T-cell (primary cell): ENCODE measurements at regions of chr21 and their contacts with region 1.

Region 1: GRCh38 chr21:42187976-42188653 is 30.8 kb upstream of the ABCG1 start:
- DNase-seq: peak; percentile 52 to 92 (median 78)
- ATAC-seq: peak; percentile 94 to 95 (median 95)
- H3K4me3 ChIP-seq: peak overlapping the region; percentile 6 to 11
- H3K4me3 Mint-ChIP-seq: peak overlapping the region; percentile 62 to 74 (median 62)
- H3K27ac ChIP-seq: peak overlapping the region; percentile 75
- H3K27ac Mint-ChIP-seq: peak overlapping the region; percentile 97 to 98
- H3K4me1 ChIP-seq: peaks cover 66 to 89% of the 10 kb centered on the region in 2 experiments
- H3K4me1 Mint-ChIP-seq: peaks cover 76 to 80% (median 79%) of the 10 kb centered on the region in 3 donors
- H3K27me3 ChIP-seq: no peaks in the 10 kb centered on the region
- H3K27me3 Mint-ChIP-seq: no peaks in the 10 kb centered on the region

Region 2: GRCh38 chr21:42440187-42440792 is 252.2 kb after region 1 on chr21:
- CTCF ChIA-PET with region 1: no interaction called
- POLR2A ChIA-PET with region 1: no interaction called
- DNase-seq: no peak
- ATAC-seq: no peak
- H3K4me3 ChIP-seq: no peak overlapping the region
- H3K4me3 Mint-ChIP-seq: no peak overlapping the region
- H3K27ac ChIP-seq: peak overlapping the region; percentile 21
- H3K27ac Mint-ChIP-seq: peak overlapping the region; percentile 80 to 82
- H3K4me1 ChIP-seq: peaks cover 0 to 30% of the 10 kb centered on the region in 2 experiments
- H3K4me1 Mint-ChIP-seq: peaks cover 34 to 50% (median 42%) of the 10 kb centered on the region in 3 donors
- H3K27me3 ChIP-seq: no peaks in the 10 kb centered on the region
- H3K27me3 Mint-ChIP-seq: no peaks in the 10 kb centered on the region

Region 3: GRCh38 chr21:42672131-42672593 is 484.0 kb after region 1 on chr21:
- CTCF ChIA-PET with region 1: no interaction called
- POLR2A ChIA-PET with region 1: interaction called in 1 of 2 experiments, 11 read pairs
- DNase-seq: no peak
- ATAC-seq: no peak
- H3K4me3 ChIP-seq: no peak overlapping the region
- H3K4me3 Mint-ChIP-seq: no peak overlapping the region
- H3K27ac ChIP-seq: no peak overlapping the region
- H3K27ac Mint-ChIP-seq: no peak overlapping the region
- H3K4me1 ChIP-seq: peaks cover 5 to 8% of the 10 kb centered on the region in 2 experiments
- H3K4me1 Mint-ChIP-seq: peaks cover 0 to 4% (median 0%) of the 10 kb centered on the region in 3 donors
- H3K27me3 ChIP-seq: peaks cover 0 to 11% of the 10 kb centered on the region in 2 experiments
- H3K27me3 Mint-ChIP-seq: no peaks in the 10 kb centered on the region